KBM-7 (cell line): ENCODE measurements at regions of chr9 and their contacts with region 1.

Region 1: DNA sequence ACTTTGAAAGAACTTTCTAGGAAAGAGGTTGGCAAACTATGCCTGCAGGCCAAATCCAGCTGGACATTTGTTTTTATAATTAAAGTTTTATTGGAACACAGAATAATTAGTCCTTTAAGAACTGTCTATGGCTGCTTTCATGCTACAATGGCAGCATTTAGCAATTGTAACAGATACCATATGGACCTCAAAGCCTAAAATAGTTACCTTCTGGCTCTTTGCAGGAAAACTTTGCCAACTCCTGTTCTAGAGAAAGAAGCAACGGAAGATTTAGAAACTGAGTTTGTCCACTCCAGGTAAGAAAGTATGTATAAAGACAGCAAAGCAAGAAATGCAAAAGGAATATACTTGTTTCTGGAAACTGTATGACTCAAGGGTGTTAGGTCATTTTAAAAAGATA is 281.7 kb upstream of the TRPM3 start:
- DNase-seq: no peak

Region 2: DNA sequence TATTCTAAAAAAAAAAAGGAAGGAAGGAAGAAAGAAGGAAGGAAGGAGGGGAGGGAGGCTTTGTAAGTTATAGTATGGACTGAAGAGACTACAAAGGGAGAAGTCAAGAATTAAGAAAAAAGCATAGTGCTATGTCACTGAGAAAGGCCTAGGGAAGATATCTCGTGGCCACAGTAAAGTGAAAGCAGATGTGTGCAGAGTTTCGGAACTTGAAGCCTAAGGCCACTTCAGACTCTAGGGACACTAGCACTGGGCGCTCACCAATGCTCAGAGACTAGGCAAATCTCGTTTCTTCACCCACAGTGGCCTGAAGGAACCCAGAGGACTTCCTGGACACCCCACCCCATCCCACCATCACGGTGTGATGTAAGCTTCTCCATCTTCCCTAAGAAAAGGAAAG is 100.3 kb before region 1 on chr9:
- in situ Hi-C with region 1: loop called (anchors 25 kb)
- DNase-seq: no peak